Ascending aorta (tissue), 2 donors: ENCODE measurements at regions of chr4 and their contacts with region 1.

Region 1: DNA sequence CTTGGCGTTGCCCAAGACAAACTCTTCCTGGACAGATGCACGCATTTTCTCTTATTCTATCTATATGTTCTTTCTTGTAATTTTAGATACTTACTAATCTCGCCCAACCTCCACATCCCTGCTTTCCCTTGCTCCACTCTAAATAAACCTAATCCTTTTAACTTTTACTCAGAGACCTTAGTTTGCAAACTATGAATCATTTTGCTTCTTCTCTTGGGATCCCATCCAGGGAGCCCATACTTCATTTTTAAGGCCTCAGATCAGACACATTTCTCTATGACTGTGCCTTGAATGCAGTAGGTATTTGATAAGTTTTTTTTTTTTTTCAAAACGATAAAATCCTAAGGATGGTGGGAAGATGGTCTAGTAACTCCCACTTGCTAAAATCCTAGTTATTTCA is 353.8 kb upstream of the HAND2 start:
- DNase-seq: no peak
- H3K4me3 ChIP-seq: no peak overlapping the region
- H3K27ac ChIP-seq: no peak overlapping the region
- H3K4me1 ChIP-seq: no peaks in the 10 kb centered on the region
- H3K27me3 ChIP-seq: no peaks in the 10 kb centered on the region
- CTCF ChIP-seq: no peak

Region 2: DNA sequence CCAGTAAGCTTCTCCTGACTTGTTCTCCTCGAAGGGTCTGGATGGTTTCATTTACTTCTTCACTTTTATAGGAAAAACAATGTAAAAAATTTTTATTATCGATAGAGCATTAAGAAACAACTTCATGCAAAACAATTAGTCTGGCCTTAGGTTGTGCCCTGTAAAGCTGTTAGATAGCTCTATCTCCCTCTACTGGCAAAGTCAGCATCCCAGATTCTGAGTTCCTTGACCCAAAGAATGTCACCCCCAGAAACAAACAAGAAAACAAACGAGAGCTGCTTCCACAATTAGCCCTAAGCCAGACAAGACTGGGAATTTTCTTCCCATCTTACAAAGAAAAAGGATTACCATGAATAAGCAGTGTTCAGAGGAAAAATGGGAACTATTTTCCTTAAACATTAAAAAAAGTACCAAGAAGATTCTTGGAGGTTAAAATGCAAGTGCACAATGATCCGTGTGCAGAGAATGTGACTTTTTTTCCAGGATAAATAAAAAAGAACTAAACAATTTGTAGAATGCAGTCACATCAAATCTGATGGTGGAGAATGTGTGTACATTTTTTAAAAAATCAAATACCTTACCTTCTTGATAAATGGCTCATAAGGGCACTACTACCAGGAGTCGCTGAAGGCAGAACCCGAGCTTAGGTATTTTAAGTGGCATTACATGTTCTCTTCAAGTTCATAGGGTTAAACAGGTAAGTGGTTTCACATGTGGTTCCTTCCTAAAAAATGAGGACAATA is 106.5 kb after region 1 on chr4:
- intact Hi-C with region 1: loop called (anchors 10 kb)
- DNase-seq: no peak
- H3K4me3 ChIP-seq: no peak overlapping the region
- H3K27ac ChIP-seq: no peak overlapping the region
- H3K4me1 ChIP-seq: no peaks in the 10 kb centered on the region
- H3K27me3 ChIP-seq: no peaks in the 10 kb centered on the region
- CTCF ChIP-seq: peak; percentile 17 to 66 (median 55)